ENCODE measurements at regions of chr9 and their contacts with region 1.

Region 1: GRCh38 chr9:137672907-137673791 is 54.3 kb downstream of the EHMT1 start:
- DNase-seq: peak in 12 of 14 experiments; percentile 9 to 77 (median 34)
- ATAC-seq: peak; percentile 86
- H3K4me3 ChIP-seq: no peak overlapping the region
- H3K4me3 Mint-ChIP-seq: no peak overlapping the region
- H3K27ac ChIP-seq: no peak overlapping the region
- H3K27ac Mint-ChIP-seq: peak overlapping the region; percentile 62
- H3K4me1 ChIP-seq: peaks cover 22% of the 10 kb centered on the region
- H3K4me1 Mint-ChIP-seq: peaks cover 46% of the 10 kb centered on the region
- H3K27me3 ChIP-seq: no peaks in the 10 kb centered on the region
- H3K27me3 Mint-ChIP-seq: no peaks in the 10 kb centered on the region
- CTCF ChIP-seq: peak; percentile 91

Region 2: DNA sequence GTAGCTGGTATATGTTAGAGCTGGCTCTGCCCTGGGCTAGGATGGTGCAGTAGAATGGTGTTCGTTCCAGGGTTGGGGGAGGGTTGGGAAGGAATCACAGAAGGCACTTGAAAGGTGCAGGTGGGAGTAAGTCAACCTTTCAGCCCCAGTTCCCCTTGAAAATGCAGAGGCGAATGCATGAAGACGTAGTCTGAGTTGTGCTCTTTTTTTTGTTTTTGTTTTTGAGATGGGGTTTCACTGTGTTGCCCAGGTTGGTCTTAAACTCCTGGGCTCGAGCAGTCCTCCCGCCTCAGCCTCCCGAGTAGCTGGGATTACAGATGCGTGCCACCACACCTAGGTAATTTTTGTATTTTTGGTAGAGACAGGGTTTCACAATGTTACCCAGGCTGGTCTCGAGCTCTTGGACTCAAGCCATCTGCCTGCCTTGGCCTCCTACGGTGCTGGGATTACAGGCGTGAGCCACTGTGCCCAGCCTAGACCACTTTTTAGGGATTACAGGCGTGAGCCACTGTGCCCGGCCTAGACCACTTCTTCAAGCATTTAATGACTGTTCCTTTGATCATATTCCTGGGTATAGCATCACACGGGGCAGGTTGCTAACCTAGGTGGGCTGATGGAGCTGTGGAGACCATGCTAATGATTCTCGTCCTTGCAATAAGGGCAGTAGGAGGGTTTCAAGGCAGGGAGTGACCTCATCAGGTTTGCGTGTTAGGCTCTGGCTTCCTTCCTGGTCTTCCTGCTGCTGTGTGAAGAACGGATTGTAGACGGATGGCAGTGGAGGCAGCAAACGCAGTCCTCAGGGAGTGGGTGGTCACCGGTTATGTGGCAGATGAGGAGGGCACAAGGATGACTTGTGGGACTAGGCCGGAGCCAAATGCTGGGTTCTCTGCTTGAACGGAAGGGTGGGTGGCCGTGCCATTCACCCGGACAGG is 40.7 kb before region 1 on chr9:
- CTCF ChIA-PET with region 1: no interaction called
- POLR2A ChIA-PET with region 1: no interaction called
- intact Hi-C with region 1: loop called in 1 of 2 experiments (anchors 2 kb)
- DNase-seq: no peak
- ATAC-seq: no peak
- H3K4me3 ChIP-seq: no peak overlapping the region
- H3K4me3 Mint-ChIP-seq: no peak overlapping the region
- H3K27ac ChIP-seq: no peak overlapping the region
- H3K27ac Mint-ChIP-seq: peak overlapping the region; percentile 10
- H3K4me1 ChIP-seq: peaks cover 52% of the 10 kb centered on the region
- H3K4me1 Mint-ChIP-seq: peaks cover 68% of the 10 kb centered on the region
- H3K27me3 ChIP-seq: no peaks in the 10 kb centered on the region
- H3K27me3 Mint-ChIP-seq: no peaks in the 10 kb centered on the region
- CTCF ChIP-seq: no peak

Region 3: DNA sequence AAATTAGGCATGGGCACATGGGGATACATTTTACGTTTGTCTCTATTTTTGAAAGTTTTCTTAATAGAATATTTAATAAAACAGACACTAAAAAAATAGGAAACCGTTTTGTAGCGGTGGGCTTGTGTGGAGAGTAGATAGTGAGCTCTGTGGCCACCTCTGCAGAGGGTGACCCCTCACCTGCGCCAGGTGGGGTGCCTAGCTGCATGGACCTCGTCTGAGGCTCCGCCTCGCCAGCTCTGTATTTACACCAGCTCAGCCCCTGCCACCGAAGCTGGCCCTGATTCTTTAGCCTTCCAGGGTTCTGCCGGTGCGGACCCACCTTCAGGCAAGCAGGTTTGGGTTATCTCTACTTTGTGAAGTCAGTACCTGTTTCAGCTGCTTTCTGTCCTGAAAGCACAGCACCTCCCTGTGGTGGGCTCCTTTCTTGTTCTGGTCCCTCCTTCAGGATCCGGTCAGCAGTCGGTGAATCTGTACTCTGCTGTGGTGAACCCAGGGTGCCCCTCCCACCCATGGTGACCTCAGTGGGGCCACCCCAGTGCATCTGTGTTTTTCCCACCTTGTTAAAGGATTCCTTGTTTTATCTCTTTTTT is 99.2 kb after region 1 on chr9:
- CTCF ChIA-PET with region 1: interaction called, 4 read pairs
- POLR2A ChIA-PET with region 1: no interaction called
- intact Hi-C with region 1: loop called in 1 of 2 experiments (anchors 1 kb)
- DNase-seq: peak in 2 of 14 experiments; percentile 13 to 14
- ATAC-seq: no peak
- H3K4me3 ChIP-seq: no peak overlapping the region
- H3K4me3 Mint-ChIP-seq: no peak overlapping the region
- H3K27ac ChIP-seq: no peak overlapping the region
- H3K27ac Mint-ChIP-seq: no peak overlapping the region
- H3K4me1 ChIP-seq: peaks cover 4% of the 10 kb centered on the region
- H3K4me1 Mint-ChIP-seq: peaks cover 5% of the 10 kb centered on the region
- H3K27me3 ChIP-seq: no peaks in the 10 kb centered on the region
- H3K27me3 Mint-ChIP-seq: no peaks in the 10 kb centered on the region
- CTCF ChIP-seq: no peak

Region 4: DNA sequence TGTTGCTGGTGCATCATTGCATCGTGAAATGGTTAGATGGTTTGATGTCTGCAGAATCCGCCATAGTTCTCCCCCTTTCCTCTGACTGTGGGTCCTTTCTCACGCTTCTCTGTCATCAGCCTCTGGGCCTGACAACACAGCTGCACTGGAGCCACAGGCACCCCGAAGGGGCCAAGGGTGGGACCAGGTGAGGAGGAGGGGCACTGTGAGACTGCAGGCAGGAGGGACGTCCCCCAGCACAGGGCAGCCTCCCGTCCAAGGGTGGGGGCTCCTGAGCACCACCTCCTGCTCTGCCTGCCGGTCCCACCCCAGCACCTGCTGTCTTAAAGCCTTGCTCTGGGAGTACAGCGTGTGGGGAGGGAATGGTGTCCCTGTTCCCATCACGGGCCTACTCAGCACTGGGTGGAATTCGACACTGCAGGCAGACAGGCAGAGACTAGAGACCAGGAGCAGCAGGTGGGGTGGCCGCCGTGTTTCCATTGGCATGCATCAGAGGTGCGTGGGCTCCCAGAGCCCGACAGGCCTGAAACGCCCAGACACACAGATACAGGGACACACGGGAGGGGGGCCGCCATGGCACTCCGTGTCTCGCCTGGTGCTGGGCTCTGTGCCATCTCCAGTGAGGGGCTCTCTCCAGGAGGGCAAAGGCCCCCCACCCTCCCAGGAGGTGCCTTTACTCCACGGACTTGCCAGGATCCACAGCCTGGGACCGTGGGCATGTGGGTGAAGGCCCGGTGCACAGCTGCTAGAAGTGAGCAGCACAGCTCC is 219.5 kb after region 1 on chr9:
- CTCF ChIA-PET with region 1: no interaction called
- POLR2A ChIA-PET with region 1: no interaction called
- intact Hi-C with region 1: no loop called
- DNase-seq: no peak
- ATAC-seq: no peak
- H3K4me3 ChIP-seq: no peak overlapping the region
- H3K4me3 Mint-ChIP-seq: no peak overlapping the region
- H3K27ac ChIP-seq: no peak overlapping the region
- H3K27ac Mint-ChIP-seq: no peak overlapping the region
- H3K4me1 ChIP-seq: no peaks in the 10 kb centered on the region
- H3K4me1 Mint-ChIP-seq: no peaks in the 10 kb centered on the region
- H3K27me3 ChIP-seq: no peaks in the 10 kb centered on the region
- H3K27me3 Mint-ChIP-seq: no peaks in the 10 kb centered on the region
- CTCF ChIP-seq: no peak

Region 5: DNA sequence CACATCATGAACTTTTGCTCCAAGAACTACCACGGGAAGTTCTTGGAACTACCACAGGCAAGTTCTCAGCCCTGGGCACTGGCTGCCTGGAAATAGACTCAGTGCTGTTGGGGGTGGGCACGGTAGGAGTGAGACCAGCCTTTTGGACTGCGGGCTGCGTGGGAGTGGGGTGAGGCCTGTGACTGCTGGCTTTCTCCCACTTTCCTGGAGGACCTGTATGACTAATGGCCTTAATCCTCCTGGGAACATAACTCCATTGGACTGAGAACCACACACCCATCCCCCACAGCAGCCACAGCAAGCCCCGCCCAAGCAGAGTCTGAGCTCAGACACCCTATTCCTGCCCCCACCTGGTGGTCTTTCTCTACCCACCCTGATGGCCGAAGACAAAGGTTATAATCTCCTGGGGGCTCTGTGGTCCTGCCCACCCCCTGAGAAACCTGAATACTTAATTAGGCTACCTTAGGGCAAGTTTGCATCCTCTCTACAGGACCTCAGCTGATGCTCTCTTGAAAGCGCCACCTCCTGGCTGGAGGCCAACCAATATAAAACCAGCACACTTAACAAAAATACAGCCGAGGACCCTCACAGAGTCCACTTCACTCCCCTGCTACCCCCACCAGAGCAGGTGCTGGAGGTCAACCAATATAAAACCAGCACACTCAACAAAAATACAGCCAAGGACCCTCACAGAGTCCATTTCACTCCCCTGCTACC is 317.0 kb after region 1 on chr9:
- CTCF ChIA-PET with region 1: no interaction called
- POLR2A ChIA-PET with region 1: no interaction called
- intact Hi-C with region 1: loop called in 1 of 2 experiments (anchors 5 kb)
- DNase-seq: peak in 2 of 14 experiments; percentile 4 to 8
- ATAC-seq: no peak
- H3K4me3 ChIP-seq: no peak overlapping the region
- H3K4me3 Mint-ChIP-seq: no peak overlapping the region
- H3K27ac ChIP-seq: no peak overlapping the region
- H3K27ac Mint-ChIP-seq: no peak overlapping the region
- H3K4me1 ChIP-seq: no peaks in the 10 kb centered on the region
- H3K4me1 Mint-ChIP-seq: no peaks in the 10 kb centered on the region
- H3K27me3 ChIP-seq: peaks cover 4 to 15% of the 10 kb centered on the region in 2 experiments
- H3K27me3 Mint-ChIP-seq: peaks cover 59% of the 10 kb centered on the region
- CTCF ChIP-seq: no peak

Region 6: GRCh38 chr9:138022121-138022741 is 349.1 kb after region 1 on chr9:
- CTCF ChIA-PET with region 1: no interaction called
- POLR2A ChIA-PET with region 1: no interaction called
- intact Hi-C with region 1: loop called in 1 of 2 experiments (anchors 10 kb)
- DNase-seq: peak in 4 of 14 experiments; percentile 7 to 29 (median 16)
- ATAC-seq: peak; percentile 37
- H3K4me3 ChIP-seq: no peak overlapping the region
- H3K4me3 Mint-ChIP-seq: no peak overlapping the region
- H3K27ac ChIP-seq: no peak overlapping the region
- H3K27ac Mint-ChIP-seq: no peak overlapping the region
- H3K4me1 ChIP-seq: peaks cover 6% of the 10 kb centered on the region
- H3K4me1 Mint-ChIP-seq: no peaks in the 10 kb centered on the region
- H3K27me3 ChIP-seq: peaks cover 18 to 28% of the 10 kb centered on the region in 2 experiments
- H3K27me3 Mint-ChIP-seq: peaks cover 42% of the 10 kb centered on the region
- CTCF ChIP-seq: no peak